ENCODE measurements at regions of chr2 and their contacts with region 1.

Region 1: GRCh38 chr2:231925303-231926179 is 655 bp downstream of the NPPC start:
- DNase-seq: peak; percentile 82
- ATAC-seq: peak; percentile 40
- H3K4me3 Mint-ChIP-seq: peak overlapping the region; percentile 70
- H3K27ac Mint-ChIP-seq: no peak overlapping the region
- H3K4me1 Mint-ChIP-seq: peaks cover 8% of the 10 kb centered on the region
- H3K27me3 Mint-ChIP-seq: peaks cover 42% of the 10 kb centered on the region
- CTCF ChIP-seq: peak; percentile 91

Region 2: GRCh38 chr2:231910771-231911170 is 14.8 kb before region 1 on chr2:
- CTCF ChIA-PET with region 1: interaction called, 19 read pairs
- POLR2A ChIA-PET with region 1: no interaction called
- intact Hi-C with region 1: no loop called
- DNase-seq: no peak
- ATAC-seq: no peak
- H3K4me3 Mint-ChIP-seq: no peak overlapping the region
- H3K27ac Mint-ChIP-seq: no peak overlapping the region
- H3K4me1 Mint-ChIP-seq: peaks cover 16% of the 10 kb centered on the region
- H3K27me3 Mint-ChIP-seq: no peaks in the 10 kb centered on the region
- CTCF ChIP-seq: no peak

Region 3: DNA sequence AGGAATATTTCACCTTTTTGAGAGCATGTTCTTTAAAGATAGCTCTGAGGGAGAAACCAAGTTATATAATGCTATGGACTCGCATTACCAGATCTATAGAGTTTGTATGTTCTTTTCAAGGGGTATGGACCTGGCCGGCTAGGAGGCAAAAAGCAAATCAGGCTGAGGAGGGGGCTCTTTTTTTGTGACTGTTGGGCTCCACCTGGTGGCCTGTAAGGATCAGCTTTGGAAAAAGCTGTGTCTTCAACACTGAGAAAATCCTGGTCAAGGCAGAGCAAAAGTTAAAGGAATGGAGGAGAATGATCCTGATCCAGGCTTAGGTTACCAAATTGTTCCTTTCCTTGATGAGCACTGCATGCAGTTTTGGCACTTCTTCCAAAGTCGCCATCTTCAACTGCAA is 216.5 kb after region 1 on chr2:
- CTCF ChIA-PET with region 1: interaction called, 121 read pairs
- POLR2A ChIA-PET with region 1: interaction called, 8 read pairs
- intact Hi-C with region 1: loop called (anchors 5 kb)
- DNase-seq: peak; percentile 69
- ATAC-seq: peak; percentile 57
- H3K4me3 Mint-ChIP-seq: no peak overlapping the region
- H3K27ac Mint-ChIP-seq: no peak overlapping the region
- H3K4me1 Mint-ChIP-seq: peaks cover 40% of the 10 kb centered on the region
- H3K27me3 Mint-ChIP-seq: no peaks in the 10 kb centered on the region
- CTCF ChIP-seq: peak; percentile 64

Region 4: GRCh38 chr2:232230557-232230956 is 305.0 kb after region 1 on chr2:
- CTCF ChIA-PET with region 1: interaction called, 4 read pairs
- POLR2A ChIA-PET with region 1: no interaction called
- intact Hi-C with region 1: loop called (anchors 10 kb)
- DNase-seq: peak; percentile 66
- ATAC-seq: peak; percentile 47
- H3K4me3 Mint-ChIP-seq: no peak overlapping the region
- H3K27ac Mint-ChIP-seq: no peak overlapping the region
- H3K4me1 Mint-ChIP-seq: peaks cover 13% of the 10 kb centered on the region
- H3K27me3 Mint-ChIP-seq: no peaks in the 10 kb centered on the region
- CTCF ChIP-seq: peak; percentile 43

Measured in activated CD8-positive, alpha-beta T cell treated with anti-CD3 and anti-CD28 coated beads for 36 hours (primary cell).